ENCODE measurements at regions of chr12 and their contacts with region 1.

Region 1: DNA sequence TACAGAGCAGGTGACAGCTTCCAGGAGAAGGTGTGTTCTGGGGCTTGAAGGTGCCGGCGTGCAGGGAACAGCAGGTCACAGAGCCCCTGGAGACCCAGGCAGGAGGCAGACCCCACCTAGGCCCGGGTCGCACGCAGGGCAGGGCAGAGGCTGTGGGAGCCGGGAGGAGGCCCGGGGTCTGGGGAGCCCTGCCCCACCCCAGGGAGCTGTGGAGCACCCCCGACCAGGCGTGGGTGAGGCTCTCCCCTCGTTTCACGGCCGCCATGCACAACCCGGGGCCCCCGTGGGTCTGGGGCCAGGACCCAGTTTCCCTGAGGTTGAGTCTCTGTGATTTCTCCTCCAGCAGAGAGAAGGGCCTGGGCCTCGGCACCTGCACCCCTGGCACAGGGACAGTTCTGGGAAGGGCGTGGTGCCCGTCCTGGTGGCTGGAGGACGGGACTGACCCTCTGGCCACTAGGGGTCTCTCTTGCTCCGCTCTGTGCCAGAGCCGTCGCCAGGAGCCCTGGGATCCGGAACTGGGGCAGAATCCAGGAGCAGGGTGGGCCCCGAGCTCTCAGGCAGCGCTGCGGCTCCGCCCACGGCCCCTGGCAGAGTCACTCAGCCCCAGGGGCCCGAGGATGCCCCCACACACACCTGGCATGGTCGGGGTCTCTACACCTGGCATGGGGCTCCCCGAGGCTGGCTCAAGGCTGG is 75.2 kb upstream of the FBRSL1 start:
- DNase-seq: peak; percentile 50 to 88 (median 70)
- ATAC-seq: peak; percentile 93
- H3K4me3 ChIP-seq: no peak overlapping the region
- H3K4me3 Mint-ChIP-seq: no peak overlapping the region
- H3K27ac ChIP-seq: no peak overlapping the region
- H3K27ac Mint-ChIP-seq: no peak overlapping the region
- H3K4me1 ChIP-seq: peaks cover 19% of the 10 kb centered on the region
- H3K4me1 Mint-ChIP-seq: peaks cover 4% of the 10 kb centered on the region
- H3K27me3 ChIP-seq: peaks cover 0 to 3% of the 10 kb centered on the region in 2 experiments
- H3K27me3 Mint-ChIP-seq: no peaks in the 10 kb centered on the region
- CTCF ChIP-seq: peak; percentile 87

Region 2: DNA sequence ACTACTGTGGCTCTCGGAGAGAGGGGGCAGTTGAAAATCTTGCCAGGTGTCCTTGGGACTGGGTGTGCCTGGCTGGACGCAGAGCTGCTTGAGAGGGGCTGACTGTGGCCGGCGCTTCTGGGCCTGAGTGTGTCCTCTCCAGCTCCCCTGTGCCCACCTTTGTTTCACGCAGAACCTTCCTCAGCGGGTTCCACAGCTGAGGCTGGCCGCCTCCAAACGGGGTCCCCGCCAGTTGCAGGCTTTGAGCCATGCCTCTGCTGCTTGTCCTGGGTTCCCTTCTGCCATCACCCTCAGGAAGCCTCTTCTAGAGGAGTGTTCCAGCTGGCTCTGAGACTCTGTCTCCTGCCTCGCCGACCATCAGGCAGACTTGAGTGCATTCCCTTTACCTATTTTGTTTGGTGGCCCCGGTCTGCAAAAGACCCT is 320.4 kb before region 1 on chr12:
- CTCF ChIA-PET with region 1: no interaction called
- POLR2A ChIA-PET with region 1: no interaction called
- intact Hi-C with region 1: no loop called
- DNase-seq: no peak
- ATAC-seq: no peak
- H3K4me3 ChIP-seq: no peak overlapping the region
- H3K4me3 Mint-ChIP-seq: no peak overlapping the region
- H3K27ac ChIP-seq: no peak overlapping the region
- H3K27ac Mint-ChIP-seq: no peak overlapping the region
- H3K4me1 ChIP-seq: peaks cover 12% of the 10 kb centered on the region
- H3K4me1 Mint-ChIP-seq: peaks cover 23% of the 10 kb centered on the region
- H3K27me3 ChIP-seq: no peaks in the 10 kb centered on the region
- H3K27me3 Mint-ChIP-seq: no peaks in the 10 kb centered on the region
- CTCF ChIP-seq: no peak

Region 3: DNA sequence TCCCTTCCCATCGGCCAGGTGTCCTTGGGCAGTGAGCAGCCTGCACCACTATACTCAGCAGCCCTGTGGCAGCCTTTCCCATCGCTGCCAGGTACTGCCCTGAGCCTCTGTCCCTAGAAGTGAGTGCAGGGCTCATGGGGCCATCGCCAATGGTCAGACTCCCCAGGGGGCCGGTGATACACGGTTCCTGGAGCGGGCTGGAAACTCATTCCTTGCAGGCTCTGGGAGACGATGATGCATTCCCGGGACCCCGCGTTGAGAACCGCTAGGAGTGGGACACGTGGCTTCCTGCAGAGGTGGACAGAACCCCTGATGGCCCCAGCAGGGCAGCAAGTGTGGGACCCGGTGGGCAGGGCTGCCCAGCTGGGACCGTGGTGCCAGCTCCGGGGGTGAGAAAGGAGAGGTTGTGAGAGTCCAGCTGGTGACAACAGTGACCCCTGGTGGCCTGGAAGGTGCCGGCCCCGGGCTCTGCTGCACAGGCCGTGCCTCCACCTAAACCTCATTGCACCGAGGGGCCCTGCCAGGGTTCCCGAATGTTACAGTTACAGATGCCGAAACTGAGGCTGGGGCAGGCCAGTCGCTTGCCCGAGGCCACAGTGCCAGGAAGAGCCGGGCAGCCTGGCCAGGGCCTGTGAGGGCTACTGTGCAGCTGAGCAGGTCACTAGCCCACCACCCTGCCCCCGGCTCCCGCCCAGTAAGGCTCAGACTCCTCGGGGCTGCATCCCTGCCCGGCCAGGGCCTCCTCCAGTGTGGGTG is 109.0 kb after region 1 on chr12:
- CTCF ChIA-PET with region 1: interaction called, 22 read pairs
- POLR2A ChIA-PET with region 1: interaction called, 5 read pairs
- intact Hi-C with region 1: loop called (anchors 1 kb)
- DNase-seq: peak; percentile 61 to 84 (median 71)
- ATAC-seq: peak; percentile 69
- H3K4me3 ChIP-seq: no peak overlapping the region
- H3K4me3 Mint-ChIP-seq: no peak overlapping the region
- H3K27ac ChIP-seq: no peak overlapping the region
- H3K27ac Mint-ChIP-seq: no peak overlapping the region
- H3K4me1 ChIP-seq: peaks cover 21% of the 10 kb centered on the region
- H3K4me1 Mint-ChIP-seq: peaks cover 11% of the 10 kb centered on the region
- H3K27me3 ChIP-seq: no peaks in the 10 kb centered on the region
- H3K27me3 Mint-ChIP-seq: no peaks in the 10 kb centered on the region
- CTCF ChIP-seq: peak; percentile 79

Region 4: GRCh38 chr12:132559644-132560363 is 145.0 kb after region 1 on chr12:
- CTCF ChIA-PET with region 1: interaction called, 7 read pairs
- POLR2A ChIA-PET with region 1: no interaction called
- intact Hi-C with region 1: loop called in 1 of 2 experiments (anchors 10 kb)
- DNase-seq: peak in 8 of 14 experiments; percentile 12 to 68 (median 44)
- ATAC-seq: peak; percentile 55
- H3K4me3 ChIP-seq: peak overlapping the region; percentile 46
- H3K4me3 Mint-ChIP-seq: peak overlapping the region; percentile 81
- H3K27ac ChIP-seq: no peak overlapping the region
- H3K27ac Mint-ChIP-seq: no peak overlapping the region
- H3K4me1 ChIP-seq: peaks cover 29% of the 10 kb centered on the region
- H3K4me1 Mint-ChIP-seq: peaks cover 22% of the 10 kb centered on the region
- H3K27me3 ChIP-seq: peaks cover 4 to 8% of the 10 kb centered on the region in 2 experiments
- H3K27me3 Mint-ChIP-seq: peaks cover 14% of the 10 kb centered on the region
- CTCF ChIP-seq: no peak

Region 5: GRCh38 chr12:132614861-132615578 is 200.2 kb after region 1 on chr12:
- CTCF ChIA-PET with region 1: interaction called, 7 read pairs
- POLR2A ChIA-PET with region 1: no interaction called
- intact Hi-C with region 1: loop called (anchors 1 kb)
- DNase-seq: peak; percentile 66 to 90 (median 74)
- ATAC-seq: peak; percentile 86
- H3K4me3 ChIP-seq: no peak overlapping the region
- H3K4me3 Mint-ChIP-seq: no peak overlapping the region
- H3K27ac ChIP-seq: no peak overlapping the region
- H3K27ac Mint-ChIP-seq: no peak overlapping the region
- H3K4me1 ChIP-seq: peaks cover 17% of the 10 kb centered on the region
- H3K4me1 Mint-ChIP-seq: peaks cover 17% of the 10 kb centered on the region
- H3K27me3 ChIP-seq: peaks cover 38 to 43% of the 10 kb centered on the region in 2 experiments
- H3K27me3 Mint-ChIP-seq: peaks cover 48% of the 10 kb centered on the region
- CTCF ChIP-seq: peak; percentile 94